Dendritic cell treated with granulocyte-macrophage colony-stimulating factor and Interleukin-4, amounts not matched to agents 40 ng/mL and 50 ng/mL, for 4 days (primary cell): ENCODE measurements at regions of chr11 and their contacts with region 1.

Region 1: GRCh38 chr11:13238879-13239514 is 38.6 kb upstream of the BMAL1 start:
- H3K4me3 Mint-ChIP-seq: peak overlapping the region; percentile 32
- H3K27ac Mint-ChIP-seq: no peak overlapping the region
- H3K4me1 Mint-ChIP-seq: peaks cover 19% of the 10 kb centered on the region
- H3K27me3 Mint-ChIP-seq: peaks cover 12% of the 10 kb centered on the region

Region 2: DNA sequence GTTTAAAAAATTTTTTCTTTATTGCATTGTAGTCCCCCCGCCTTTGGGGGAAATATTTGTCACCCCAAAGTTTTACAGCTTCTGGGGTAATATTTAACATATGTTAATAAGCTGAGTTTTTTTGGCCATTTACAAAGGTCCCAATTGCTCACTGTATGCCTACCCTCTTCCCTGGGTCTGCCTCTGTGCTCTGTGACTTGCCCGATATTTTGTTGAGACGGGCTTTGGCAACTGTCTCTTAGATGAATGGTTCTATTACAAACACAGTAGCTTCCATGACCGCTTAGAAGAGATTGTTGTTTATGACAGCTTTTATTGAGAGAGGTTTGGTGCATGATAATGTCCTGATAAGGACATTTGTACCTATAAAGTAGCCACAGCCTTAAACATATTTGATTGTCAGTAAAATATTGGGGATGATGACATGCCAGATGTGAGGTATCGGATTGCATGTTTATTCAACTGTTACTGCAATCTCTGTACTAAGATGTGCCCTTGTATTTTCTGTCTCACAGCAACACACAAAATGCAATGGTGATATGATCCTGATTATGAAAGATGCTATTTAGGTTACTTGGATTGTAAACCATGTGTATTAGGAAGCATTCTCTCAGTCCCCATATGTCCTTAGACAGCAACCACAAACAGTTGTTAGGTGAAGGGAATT is 461.7 kb before region 1 on chr11:
- intact Hi-C with region 1: no loop called
- H3K4me3 Mint-ChIP-seq: no peak overlapping the region
- H3K27ac Mint-ChIP-seq: no peak overlapping the region
- H3K4me1 Mint-ChIP-seq: no peaks in the 10 kb centered on the region
- H3K27me3 Mint-ChIP-seq: peaks cover 3% of the 10 kb centered on the region

Region 3: DNA sequence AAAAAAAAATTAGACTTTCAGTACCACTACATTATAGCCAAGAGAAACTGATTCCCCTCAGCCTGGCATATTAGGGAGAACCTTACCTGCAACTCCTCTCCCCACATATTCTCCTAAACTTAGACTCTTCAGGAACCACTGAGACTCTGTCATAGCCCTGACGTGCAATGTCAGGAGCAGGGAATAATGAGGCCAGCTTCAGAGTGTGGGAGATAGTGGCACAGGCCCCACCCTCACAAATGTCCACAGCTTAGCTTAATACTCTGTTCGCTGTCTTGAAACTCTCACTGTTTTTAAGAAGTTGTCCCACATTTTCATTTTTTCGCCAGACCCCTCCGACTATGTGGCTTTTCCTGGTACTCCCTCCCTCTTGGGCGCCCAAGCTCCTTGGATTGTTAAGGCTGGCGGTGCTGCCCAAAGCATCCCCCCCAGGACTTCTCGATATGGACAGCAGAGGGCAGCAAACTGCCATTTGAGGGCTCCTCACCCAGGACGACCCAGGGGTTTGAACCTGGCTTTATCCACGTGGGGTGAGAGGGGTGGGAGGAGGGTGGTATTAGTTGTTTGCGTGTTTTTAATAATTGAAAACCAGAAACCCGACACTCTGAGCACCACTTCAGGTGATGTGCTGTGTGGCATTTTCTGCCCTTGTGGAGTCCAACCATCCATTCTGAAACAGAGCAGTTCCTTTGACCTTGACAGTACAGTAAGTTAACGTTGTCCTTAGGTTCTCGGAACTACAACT is 275.0 kb before region 1 on chr11:
- intact Hi-C with region 1: loop called (anchors 2 kb)
- H3K4me3 Mint-ChIP-seq: no peak overlapping the region
- H3K27ac Mint-ChIP-seq: no peak overlapping the region
- H3K4me1 Mint-ChIP-seq: no peaks in the 10 kb centered on the region
- H3K27me3 Mint-ChIP-seq: no peaks in the 10 kb centered on the region

Region 4: GRCh38 chr11:13210424-13210823 is 28.6 kb before region 1 on chr11:
- intact Hi-C with region 1: loop called (anchors 1 kb)
- H3K4me3 Mint-ChIP-seq: no peak overlapping the region
- H3K27ac Mint-ChIP-seq: peak overlapping the region; percentile 10
- H3K4me1 Mint-ChIP-seq: peaks cover 54% of the 10 kb centered on the region
- H3K27me3 Mint-ChIP-seq: no peaks in the 10 kb centered on the region

Region 5: GRCh38 chr11:13335319-13335718 is 96.3 kb after region 1 on chr11:
- intact Hi-C with region 1: loop called (anchors 2 kb)
- H3K4me3 Mint-ChIP-seq: no peak overlapping the region
- H3K27ac Mint-ChIP-seq: no peak overlapping the region
- H3K4me1 Mint-ChIP-seq: peaks cover 70% of the 10 kb centered on the region
- H3K27me3 Mint-ChIP-seq: no peaks in the 10 kb centered on the region